ENCODE measurements at regions of chr6 and their contacts with region 1.

Region 1: DNA sequence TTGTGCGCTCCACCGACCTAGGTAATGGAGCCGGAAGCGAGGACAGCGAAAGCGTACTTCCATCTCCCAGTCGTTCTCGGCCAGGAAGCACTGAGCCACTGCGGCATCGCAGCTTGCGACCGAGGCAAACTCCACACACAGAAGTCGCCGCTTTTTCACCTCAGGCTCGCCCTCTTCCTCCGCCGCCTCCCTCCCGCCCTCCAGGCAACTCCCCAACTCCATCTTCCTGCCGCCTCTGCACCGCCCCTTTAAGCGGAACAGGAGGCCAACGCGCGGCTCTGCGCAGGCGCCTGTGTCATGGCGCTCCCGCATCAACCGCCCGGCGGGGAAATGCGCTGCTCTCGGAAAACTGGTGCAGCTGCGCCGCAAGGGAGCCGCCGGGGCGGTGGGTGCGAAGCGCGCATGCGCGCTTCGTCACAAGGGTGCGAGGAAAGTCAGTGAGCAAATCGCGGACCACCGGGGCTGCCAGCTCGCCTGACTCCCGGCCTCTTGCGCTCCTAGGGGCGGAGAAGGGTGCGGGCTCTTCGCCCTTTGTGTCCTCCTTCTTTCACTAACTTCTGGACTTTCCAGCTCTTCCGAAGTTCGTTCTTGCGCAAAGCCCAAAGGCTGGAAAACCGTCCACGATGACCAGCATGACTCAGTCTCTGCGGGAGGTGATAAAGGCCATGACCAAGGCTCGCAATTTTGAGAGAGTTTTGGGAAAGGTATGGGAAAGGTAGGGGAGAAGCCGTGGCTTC is at the starts of genes ACOT13 and TDP2:
- DNase-seq: peak; percentile 96
- H3K4me3 Mint-ChIP-seq: peak within 1 kb of the TSS; percentile 97
- H3K27ac Mint-ChIP-seq: peak within 1 kb of the TSS; percentile 100
- H3K4me1 Mint-ChIP-seq: peaks cover 36% of the 10 kb centered on the region
- H3K27me3 Mint-ChIP-seq: no peaks in the 10 kb centered on the region
- total RNA-seq, gene ACOT13: 30.2 and 36.6 TPM in 2 replicates
- total RNA-seq, gene TDP2: 45.6 and 47.0 TPM in 2 replicates

Region 2: DNA sequence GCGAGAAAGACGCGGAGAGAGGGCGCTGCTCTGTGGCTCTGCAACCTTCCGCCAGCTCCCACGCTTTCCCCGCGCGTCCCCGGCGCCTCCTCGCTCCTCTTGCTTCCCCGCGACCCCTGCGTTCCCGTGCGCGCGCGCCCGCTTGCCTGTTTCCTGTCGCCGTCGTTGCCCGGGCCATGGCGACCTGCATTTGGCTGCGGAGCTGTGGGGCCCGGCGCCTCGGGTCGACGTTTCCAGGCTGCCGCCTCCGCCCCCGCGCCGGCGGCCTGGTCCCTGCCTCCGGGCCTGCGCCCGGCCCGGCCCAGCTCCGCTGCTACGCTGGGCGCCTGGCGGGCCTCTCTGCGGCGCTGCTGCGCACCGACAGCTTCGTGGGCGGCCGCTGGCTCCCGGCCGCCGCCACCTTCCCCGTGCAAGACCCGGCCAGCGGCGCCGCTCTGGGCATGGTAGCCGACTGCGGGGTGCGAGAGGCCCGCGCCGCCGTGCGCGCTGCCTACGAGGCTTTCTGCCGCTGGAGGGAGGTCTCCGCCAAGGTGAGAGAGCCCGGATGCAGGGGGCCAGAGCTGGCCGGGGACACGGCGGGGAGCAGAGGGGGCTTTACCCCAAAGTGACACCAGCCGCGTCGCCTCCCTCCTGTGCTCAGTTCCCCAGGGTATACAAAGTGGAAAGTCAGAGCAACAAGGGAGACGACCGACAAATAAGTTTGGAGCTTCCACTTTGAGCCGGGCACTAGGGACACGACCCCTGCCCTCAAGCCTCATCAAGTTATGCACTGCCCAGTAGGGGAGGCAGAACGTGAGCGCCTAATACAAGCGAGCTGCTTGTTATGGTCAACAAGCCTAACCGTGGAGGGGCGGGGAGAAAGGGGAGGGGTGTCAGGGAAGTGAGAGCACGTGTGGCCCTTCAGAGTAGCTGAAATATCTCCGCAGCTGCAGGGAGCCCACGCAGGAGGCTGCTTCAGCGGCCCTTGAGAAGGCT is 171.7 kb before region 1 on chr6 and contains the start of gene ALDH5A1:
- intact Hi-C with region 1: loop called (anchors 10 kb)
- DNase-seq: peak; percentile 70
- H3K4me3 Mint-ChIP-seq: peak within 1 kb of the TSS; percentile 80
- H3K27ac Mint-ChIP-seq: peak within 1 kb of the TSS; percentile 33
- H3K4me1 Mint-ChIP-seq: peaks cover 21% of the 10 kb centered on the region
- H3K27me3 Mint-ChIP-seq: peaks cover 3% of the 10 kb centered on the region
- total RNA-seq, gene ALDH5A1: 11.4 and 12.3 TPM in 2 replicates

Region 3: DNA sequence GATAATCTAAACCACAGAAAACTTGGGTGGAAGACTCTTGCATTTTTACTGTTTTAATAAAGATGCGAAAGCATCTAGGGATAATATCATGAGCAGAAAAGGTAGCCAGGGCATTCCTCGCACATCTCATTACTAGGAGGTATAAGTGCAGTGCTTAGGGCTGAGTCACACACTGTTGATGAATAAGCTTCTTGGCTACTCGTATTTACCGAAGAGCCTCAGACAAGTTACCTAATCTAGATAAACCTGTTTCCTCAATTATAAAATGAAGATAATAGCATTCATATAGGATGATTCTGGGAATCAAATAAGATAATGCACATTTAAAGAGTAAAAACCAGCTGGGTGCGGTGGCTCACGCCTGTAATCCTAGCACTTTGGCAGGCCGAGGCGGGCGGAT is 20.0 kb before region 1 on chr6:
- intact Hi-C with region 1: loop called (anchors 2 kb)
- DNase-seq: no peak
- H3K4me3 Mint-ChIP-seq: peak overlapping the region; percentile 86
- H3K27ac Mint-ChIP-seq: no peak overlapping the region
- H3K4me1 Mint-ChIP-seq: peaks cover 17% of the 10 kb centered on the region
- H3K27me3 Mint-ChIP-seq: peaks cover 23% of the 10 kb centered on the region

Region 4: DNA sequence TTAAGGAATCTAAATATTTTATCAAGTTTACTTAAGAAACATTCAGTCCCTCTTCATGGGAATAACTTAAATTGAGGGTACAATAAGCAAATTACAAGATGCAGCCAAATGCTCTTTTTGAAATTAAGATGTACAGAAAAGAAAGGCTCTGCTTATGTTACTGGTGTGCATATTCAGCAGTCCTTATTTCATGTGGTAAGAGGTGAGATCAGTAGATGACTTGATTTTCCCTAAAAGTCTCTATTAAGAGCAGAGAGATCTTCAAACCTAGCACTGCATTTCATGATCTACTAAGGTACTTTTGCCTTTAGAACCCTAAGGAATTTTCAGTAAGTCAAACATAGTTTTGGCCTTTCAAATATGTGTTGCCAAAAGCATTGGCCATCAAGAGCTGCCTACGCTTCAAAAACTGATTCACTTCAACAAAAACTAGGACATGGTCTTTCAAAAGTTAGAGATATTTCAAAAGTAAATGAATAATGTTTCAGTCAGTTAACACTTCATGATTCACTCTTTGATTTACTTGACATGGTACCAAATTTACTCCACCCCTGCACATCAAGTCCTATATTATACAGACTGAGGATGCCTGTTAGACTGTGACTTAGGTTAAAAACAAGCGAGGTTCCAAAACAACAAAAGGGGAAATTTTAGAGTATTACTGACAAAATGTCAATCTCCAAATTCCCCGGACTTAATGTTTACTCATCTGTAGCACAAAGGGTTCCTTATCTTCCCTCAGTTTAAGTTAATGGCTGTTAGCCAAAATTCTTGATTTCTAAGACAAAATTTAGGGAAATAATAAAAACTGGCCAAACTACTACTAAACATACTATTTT is 32.9 kb after region 1 on chr6:
- intact Hi-C with region 1: loop called (anchors 1 kb)
- DNase-seq: no peak
- H3K4me3 Mint-ChIP-seq: no peak overlapping the region
- H3K27ac Mint-ChIP-seq: peak overlapping the region; percentile 60
- H3K4me1 Mint-ChIP-seq: peaks cover 14% of the 10 kb centered on the region
- H3K27me3 Mint-ChIP-seq: no peaks in the 10 kb centered on the region

Region 5: GRCh38 chr6:24720604-24721460 is 54.0 kb after region 1 on chr6:
- intact Hi-C with region 1: loop called (anchors 1 kb)
- DNase-seq: peak; percentile 100
- H3K4me3 Mint-ChIP-seq: peak overlapping the region; percentile 99
- H3K27ac Mint-ChIP-seq: peak overlapping the region; percentile 100
- H3K4me1 Mint-ChIP-seq: peaks cover 33% of the 10 kb centered on the region
- H3K27me3 Mint-ChIP-seq: no peaks in the 10 kb centered on the region

Region 6: DNA sequence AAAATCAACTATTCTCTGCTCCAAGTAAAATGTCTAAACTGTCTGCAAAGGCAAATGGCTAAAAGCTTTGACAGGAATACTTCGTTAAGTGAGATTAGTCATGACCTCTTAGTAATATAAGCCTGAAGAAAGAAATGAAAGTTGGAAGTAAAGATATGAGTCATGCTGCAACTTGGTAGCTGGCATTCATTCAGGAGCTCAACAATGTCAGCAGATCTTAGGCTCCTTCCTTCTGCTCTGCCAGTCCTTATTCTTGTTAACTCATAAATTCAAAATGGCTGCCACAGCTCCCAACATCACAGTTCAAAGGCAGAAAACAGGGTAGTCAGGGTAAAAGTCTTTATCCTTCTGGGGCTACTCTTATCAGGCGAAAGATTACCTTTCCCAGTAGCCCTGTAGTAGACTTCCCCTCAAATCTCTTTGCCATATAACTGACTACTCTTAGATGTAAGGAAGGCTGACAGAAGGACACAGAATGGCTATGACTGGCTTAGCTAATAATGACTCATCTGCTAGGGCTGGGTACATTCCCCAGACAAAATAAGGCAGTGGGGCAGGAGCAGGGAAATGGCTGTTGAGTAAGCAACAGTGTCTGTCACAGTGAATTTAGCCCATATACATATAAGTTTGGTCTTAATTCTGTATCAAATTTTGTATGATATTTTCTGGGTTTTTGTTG is 76.6 kb after region 1 on chr6:
- intact Hi-C with region 1: loop called (anchors 2 kb)
- DNase-seq: no peak
- H3K4me3 Mint-ChIP-seq: no peak overlapping the region
- H3K27ac Mint-ChIP-seq: peak overlapping the region; percentile 79
- H3K4me1 Mint-ChIP-seq: peaks cover 19% of the 10 kb centered on the region
- H3K27me3 Mint-ChIP-seq: no peaks in the 10 kb centered on the region

Region 7: GRCh38 chr6:24774696-24775519 is 108.1 kb after region 1 on chr6 and contains the start of gene GMNN:
- intact Hi-C with region 1: loop called (anchors 2 kb)
- DNase-seq: peak; percentile 95
- H3K4me3 Mint-ChIP-seq: peak within 1 kb of the TSS; percentile 98
- H3K27ac Mint-ChIP-seq: peak within 1 kb of the TSS; percentile 98
- H3K4me1 Mint-ChIP-seq: peaks cover 30% of the 10 kb centered on the region
- H3K27me3 Mint-ChIP-seq: no peaks in the 10 kb centered on the region
- total RNA-seq, gene GMNN: 68.5 and 71.5 TPM in 2 replicates